Activated B cell treated with CpG ODN at 0.5 μM for 24 hours (primary cell): ENCODE measurements at regions of chr5 and their contacts with region 1.

Region 1: GRCh38 chr5:76867827-76868693 is 18.2 kb downstream of the S100Z start:
- DNase-seq: peak; percentile 17
- ATAC-seq: peak; percentile 90
- H3K4me3 Mint-ChIP-seq: no peak overlapping the region
- H3K27ac Mint-ChIP-seq: no peak overlapping the region
- H3K4me1 Mint-ChIP-seq: peaks cover 3% of the 10 kb centered on the region
- H3K27me3 Mint-ChIP-seq: no peaks in the 10 kb centered on the region
- CTCF ChIP-seq: no peak

Region 2: GRCh38 chr5:76960004-76960625 is 92.1 kb after region 1 on chr5:
- CTCF ChIA-PET with region 1: no interaction called
- POLR2A ChIA-PET with region 1: no interaction called
- intact Hi-C with region 1: no loop called
- DNase-seq: no peak
- ATAC-seq: no peak
- H3K4me3 Mint-ChIP-seq: no peak overlapping the region
- H3K27ac Mint-ChIP-seq: no peak overlapping the region
- H3K4me1 Mint-ChIP-seq: no peaks in the 10 kb centered on the region
- H3K27me3 Mint-ChIP-seq: peaks cover 14% of the 10 kb centered on the region
- CTCF ChIP-seq: no peak

Region 3: GRCh38 chr5:77015938-77016569 is 148.0 kb after region 1 on chr5:
- CTCF ChIA-PET with region 1: interaction called, 4 read pairs
- POLR2A ChIA-PET with region 1: no interaction called
- intact Hi-C with region 1: loop called (anchors 1 kb)
- DNase-seq: no peak
- ATAC-seq: no peak
- H3K4me3 Mint-ChIP-seq: no peak overlapping the region
- H3K27ac Mint-ChIP-seq: no peak overlapping the region
- H3K4me1 Mint-ChIP-seq: no peaks in the 10 kb centered on the region
- H3K27me3 Mint-ChIP-seq: peaks cover 14% of the 10 kb centered on the region
- CTCF ChIP-seq: no peak

Region 4: DNA sequence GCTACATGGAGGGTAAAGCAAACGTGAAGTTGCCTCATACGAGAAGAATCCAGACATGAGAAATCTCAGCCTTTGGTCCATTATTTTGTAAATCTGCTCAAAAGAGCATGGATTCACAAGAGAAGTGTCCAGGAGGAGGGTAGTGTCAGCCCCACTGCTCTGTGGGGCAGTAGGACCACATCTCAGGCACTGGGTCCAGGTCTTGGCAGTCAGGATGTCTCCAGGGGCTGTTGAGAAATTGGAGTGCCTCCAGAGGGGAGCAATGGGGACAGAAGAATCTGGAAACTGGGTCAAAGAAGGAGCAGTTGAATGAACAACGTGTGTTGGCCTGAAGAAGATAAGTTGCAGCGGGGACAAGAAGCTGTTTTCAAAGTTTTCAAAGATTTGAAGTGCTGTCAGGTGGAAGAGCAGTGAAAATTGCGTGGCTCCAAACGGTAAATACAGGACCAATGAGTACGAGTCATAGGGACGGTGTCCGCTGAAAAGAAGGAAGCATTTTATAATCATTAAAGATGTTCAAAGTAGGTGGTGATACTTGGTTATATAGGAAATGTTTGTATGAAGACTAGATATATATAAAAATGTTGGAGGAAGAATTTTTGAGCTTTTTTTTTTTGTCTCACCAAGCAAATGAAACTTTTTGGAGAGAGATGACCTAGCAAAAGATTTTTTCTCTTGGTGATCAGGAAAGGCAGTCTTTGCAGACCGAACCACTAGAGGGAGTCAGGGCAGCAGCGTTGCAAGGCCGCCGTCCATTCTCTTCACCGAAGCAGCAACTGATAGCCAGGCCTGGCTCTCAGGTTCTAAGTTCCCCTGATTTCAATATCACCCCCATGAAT is 276.2 kb after region 1 on chr5:
- CTCF ChIA-PET with region 1: no interaction called
- POLR2A ChIA-PET with region 1: no interaction called
- intact Hi-C with region 1: loop called (anchors 1 kb)
- DNase-seq: no peak
- ATAC-seq: peak; percentile 65
- H3K4me3 Mint-ChIP-seq: no peak overlapping the region
- H3K27ac Mint-ChIP-seq: no peak overlapping the region
- H3K4me1 Mint-ChIP-seq: peaks cover 2% of the 10 kb centered on the region
- H3K27me3 Mint-ChIP-seq: peaks cover 2% of the 10 kb centered on the region
- CTCF ChIP-seq: no peak

Region 5: GRCh38 chr5:77630258-77631089 is 762.4 kb after region 1 on chr5:
- CTCF ChIA-PET with region 1: no interaction called
- POLR2A ChIA-PET with region 1: interaction called, 4 read pairs
- intact Hi-C with region 1: loop called (anchors 2 kb)
- DNase-seq: peak; percentile 49
- ATAC-seq: peak; percentile 79
- H3K4me3 Mint-ChIP-seq: peak overlapping the region; percentile 82
- H3K27ac Mint-ChIP-seq: peak overlapping the region; percentile 56
- H3K4me1 Mint-ChIP-seq: peaks cover 28% of the 10 kb centered on the region
- H3K27me3 Mint-ChIP-seq: peaks cover 41% of the 10 kb centered on the region
- CTCF ChIP-seq: no peak

Region 6: DNA sequence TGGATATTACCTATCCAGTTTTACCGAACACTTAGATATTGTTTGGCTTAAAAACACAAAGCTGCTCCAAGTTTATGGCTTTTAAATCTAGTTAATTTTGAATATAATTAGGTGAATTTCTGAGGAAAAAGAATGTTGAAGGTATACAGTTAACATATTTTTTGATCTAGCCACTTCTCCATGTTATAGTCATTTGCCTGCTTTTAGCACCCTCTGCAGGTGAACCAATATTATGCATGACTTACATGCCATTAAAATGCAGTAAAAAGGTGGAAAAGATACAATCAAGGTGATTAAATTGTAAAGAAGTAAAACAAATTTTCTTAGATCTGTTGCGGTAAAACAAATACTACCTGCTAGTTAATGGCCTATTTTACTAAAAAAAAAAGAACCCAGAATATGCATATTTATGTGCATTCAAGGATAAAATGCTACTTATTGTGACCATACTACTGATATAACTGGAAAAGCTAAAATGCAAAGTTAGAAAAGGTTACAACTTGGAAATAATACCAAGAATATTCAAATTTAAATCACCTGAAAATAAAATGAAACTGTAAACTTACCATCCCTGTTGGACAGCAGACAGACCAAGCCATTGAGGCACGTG is 1294.3 kb after region 1 on chr5:
- CTCF ChIA-PET with region 1: no interaction called
- POLR2A ChIA-PET with region 1: no interaction called
- intact Hi-C with region 1: loop called (anchors 2 kb)
- DNase-seq: no peak
- ATAC-seq: no peak
- H3K4me3 Mint-ChIP-seq: no peak overlapping the region
- H3K27ac Mint-ChIP-seq: no peak overlapping the region
- H3K4me1 Mint-ChIP-seq: no peaks in the 10 kb centered on the region
- H3K27me3 Mint-ChIP-seq: no peaks in the 10 kb centered on the region
- CTCF ChIP-seq: no peak